Activated naive CD4-positive, alpha-beta T cell treated with anti-CD3 and anti-CD28 coated beads, Interleukin-2, amount 10 ng/mL, durations not matched to agents 7 days and 5 days (primary cell): ENCODE measurements at regions of chr15 and their contacts with region 1.

Region 1: DNA sequence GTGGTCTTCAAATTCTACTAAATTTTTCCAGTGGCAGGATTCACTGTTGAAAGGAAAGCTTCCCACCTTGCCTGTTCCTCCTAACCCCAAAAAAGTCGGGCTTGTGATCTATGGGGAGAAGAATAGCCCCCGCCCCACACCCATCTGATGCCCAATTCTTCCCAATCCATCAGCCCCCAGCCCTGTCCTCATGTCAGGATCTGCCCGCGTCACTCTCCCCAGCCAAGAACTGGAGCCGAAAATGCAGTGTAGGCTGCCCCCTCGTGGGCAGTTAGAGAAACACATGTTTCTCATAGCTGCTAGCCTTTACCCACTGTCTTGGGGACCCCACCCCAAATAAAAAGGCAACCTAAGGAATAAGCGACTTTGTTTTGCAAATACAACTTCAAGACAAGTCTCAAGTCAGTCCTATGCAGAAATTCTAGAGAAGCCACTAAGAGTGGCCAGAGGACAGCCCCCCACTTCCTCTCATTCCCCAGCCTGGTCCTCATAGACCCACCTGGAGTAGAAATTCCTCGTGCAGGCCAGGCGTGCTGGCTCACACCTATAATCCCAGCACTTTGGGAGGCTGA is 13.0 kb upstream of the CSK start:
- DNase-seq: peak; percentile 81
- H3K4me3 Mint-ChIP-seq: no peak overlapping the region
- H3K27ac Mint-ChIP-seq: no peak overlapping the region
- H3K4me1 Mint-ChIP-seq: peaks cover 39% of the 10 kb centered on the region
- H3K27me3 Mint-ChIP-seq: peaks cover 28% of the 10 kb centered on the region

Region 2: DNA sequence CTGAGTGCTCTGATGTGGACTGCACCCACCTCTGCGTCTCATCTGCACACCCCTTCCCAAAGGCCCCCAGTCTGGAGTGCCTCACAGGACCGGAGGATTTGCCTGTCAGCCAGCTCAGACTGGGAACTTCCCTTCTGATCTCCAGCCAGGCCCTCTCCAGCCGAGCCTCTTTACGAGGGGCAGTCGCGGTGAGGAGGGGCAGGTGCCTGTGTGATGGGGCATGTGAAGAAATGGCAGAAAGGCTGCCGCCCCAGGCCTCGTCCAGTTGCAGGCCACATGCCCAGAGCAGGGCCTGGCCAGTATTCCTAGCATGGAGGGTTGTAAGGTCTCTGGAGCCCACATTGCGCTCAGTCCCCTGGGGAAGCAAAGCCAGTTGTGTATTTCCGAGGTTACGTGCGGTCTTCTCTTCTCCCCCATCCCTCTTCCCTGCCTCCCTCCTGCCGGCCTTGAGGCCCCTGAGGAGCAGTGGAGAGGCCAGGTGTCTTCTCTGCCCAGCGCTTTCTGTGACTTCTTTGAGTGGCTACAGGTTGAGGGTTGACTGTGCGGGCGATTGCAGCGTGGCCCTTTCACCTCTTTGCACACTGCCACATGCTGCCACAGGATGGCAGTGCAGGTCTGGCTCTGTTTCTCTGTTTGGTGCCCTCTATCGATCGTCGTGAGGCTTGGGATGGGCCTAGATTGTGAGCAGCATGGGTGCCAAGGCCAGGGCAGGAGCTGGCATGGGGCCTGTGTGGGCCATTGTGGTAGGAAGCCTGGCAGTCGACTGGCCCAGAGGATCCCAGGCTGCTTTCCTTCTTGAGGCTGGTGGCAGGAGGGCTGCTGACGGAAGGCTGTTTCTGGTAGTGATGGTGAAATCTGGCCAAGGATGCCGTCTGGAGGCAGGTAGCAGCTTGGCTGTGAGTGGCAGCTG is 148.0 kb before region 1 on chr15:
- CTCF ChIA-PET with region 1: interaction called, 21 read pairs
- DNase-seq: peak; percentile 87
- H3K4me3 Mint-ChIP-seq: no peak overlapping the region
- H3K27ac Mint-ChIP-seq: peak overlapping the region; percentile 79
- H3K4me1 Mint-ChIP-seq: peaks cover 61% of the 10 kb centered on the region
- H3K27me3 Mint-ChIP-seq: no peaks in the 10 kb centered on the region

Region 3: DNA sequence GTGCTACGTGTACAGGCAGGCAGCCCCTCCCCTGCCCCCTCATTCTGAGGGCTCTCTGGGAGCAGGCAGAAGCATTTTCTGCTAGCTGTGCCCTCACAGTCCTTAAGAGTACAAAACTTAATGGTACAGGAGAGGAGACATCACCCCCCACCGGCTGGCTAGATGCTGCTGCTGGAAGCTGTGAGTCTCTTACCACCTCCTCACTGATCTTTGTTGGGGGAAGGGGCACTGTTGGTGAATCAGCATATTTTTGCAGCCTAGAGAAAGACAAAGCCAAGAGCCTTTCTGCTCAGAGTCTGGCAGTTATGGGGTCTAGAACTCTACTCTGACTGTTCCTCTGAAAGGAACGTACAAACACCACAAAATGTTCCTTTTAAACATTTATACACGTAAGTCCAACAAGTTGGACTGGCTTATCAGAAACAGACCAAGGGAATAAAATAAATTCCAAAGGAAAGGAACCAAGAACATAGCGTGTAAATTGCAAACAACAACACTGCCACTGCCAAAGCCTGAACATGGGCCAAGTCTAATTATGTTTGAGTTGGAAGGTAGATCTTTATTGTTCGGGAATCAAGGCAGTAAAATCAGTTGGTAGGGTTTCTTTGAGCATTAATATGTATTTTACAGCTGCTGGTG is 126.0 kb before region 1 on chr15:
- CTCF ChIA-PET with region 1: interaction called, 347 read pairs
- DNase-seq: no peak
- H3K4me3 Mint-ChIP-seq: no peak overlapping the region
- H3K27ac Mint-ChIP-seq: no peak overlapping the region
- H3K4me1 Mint-ChIP-seq: peaks cover 17% of the 10 kb centered on the region
- H3K27me3 Mint-ChIP-seq: no peaks in the 10 kb centered on the region

Region 4: GRCh38 chr15:74808073-74808755 is 39.4 kb after region 1 on chr15:
- CTCF ChIA-PET with region 1: interaction called, 48 read pairs
- DNase-seq: no peak
- H3K4me3 Mint-ChIP-seq: no peak overlapping the region
- H3K27ac Mint-ChIP-seq: peak overlapping the region; percentile 77
- H3K4me1 Mint-ChIP-seq: peaks cover 14% of the 10 kb centered on the region
- H3K27me3 Mint-ChIP-seq: peaks cover 25% of the 10 kb centered on the region

Region 5: DNA sequence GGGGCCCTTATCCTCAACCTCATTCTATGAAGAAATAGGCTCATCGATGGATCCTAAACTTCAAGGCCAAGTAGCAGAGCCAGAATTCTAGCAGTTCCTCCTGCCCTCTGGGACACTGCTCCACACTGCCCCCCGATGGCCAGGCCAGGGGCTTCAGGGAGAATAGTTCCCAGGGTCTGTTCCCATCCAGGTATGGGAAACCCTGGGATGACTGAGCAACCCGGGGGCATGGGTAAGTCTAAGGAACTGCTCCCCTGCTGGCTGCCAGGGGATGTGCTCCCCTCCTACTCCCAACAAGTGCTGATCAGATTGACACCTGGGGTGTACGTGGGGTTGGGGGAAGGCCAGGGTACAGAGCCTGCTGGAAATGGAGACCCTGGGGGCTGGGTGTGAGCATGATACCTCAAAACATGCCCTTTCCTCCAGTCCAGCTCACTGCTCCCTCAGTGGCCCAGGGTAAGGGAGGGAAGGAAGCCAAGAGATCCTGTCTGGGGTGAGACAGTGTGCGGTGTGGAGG is 66.5 kb after region 1 on chr15:
- CTCF ChIA-PET with region 1: interaction called, 13 read pairs
- DNase-seq: peak; percentile 63
- H3K4me3 Mint-ChIP-seq: no peak overlapping the region
- H3K27ac Mint-ChIP-seq: no peak overlapping the region
- H3K4me1 Mint-ChIP-seq: no peaks in the 10 kb centered on the region
- H3K27me3 Mint-ChIP-seq: peaks cover 9% of the 10 kb centered on the region

Region 6: GRCh38 chr15:74950078-74951000 is 181.5 kb after region 1 on chr15:
- CTCF ChIA-PET with region 1: interaction called, 75 read pairs
- DNase-seq: peak; percentile 88
- H3K4me3 Mint-ChIP-seq: no peak overlapping the region
- H3K27ac Mint-ChIP-seq: no peak overlapping the region
- H3K4me1 Mint-ChIP-seq: peaks cover 15% of the 10 kb centered on the region
- H3K27me3 Mint-ChIP-seq: peaks cover 29% of the 10 kb centered on the region